Psoas muscle (tissue), 8 donors: ENCODE measurements at regions of chr11 and their contacts with region 1.

Region 1: GRCh38 chr11:62573592-62574362 is at the start of gene EEF1G:
- DNase-seq: peak; percentile 98 to 99
- ATAC-seq: peak; percentile 92 to 94 (median 94)
- H3K4me3 ChIP-seq: peak within 1 kb of the TSS; percentile 90
- H3K27ac ChIP-seq: peak within 1 kb of the TSS; percentile 92
- H3K4me1 ChIP-seq: peaks cover 56% of the 10 kb centered on the region
- H3K27me3 ChIP-seq: no peaks in the 10 kb centered on the region
- CTCF ChIP-seq: no peak
- total RNA-seq, gene EEF1G: 1,137 to 1,954 (median 1,509) TPM

Region 2: DNA sequence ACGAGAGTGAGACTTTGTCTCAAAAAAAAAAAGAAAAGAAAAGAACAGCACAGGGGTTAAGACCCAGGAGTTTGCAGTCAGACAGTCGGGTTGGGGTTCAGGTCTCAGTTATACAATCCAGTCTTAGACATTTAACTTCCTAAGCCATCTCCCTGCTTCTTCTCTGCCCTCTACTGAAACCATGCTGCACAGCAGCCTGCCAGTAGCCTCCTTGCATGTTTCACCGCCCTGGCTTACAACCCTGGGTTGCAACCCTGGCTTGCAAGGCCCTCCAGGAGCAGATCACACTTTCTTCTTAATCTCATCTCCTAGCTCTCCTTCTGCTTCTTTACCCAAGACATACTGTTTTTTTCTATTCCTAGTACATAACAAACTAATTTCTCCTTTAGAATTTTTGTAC is 53.9 kb after region 1 on chr11:
- intact Hi-C with region 1: no loop called
- DNase-seq: no peak
- ATAC-seq: no peak
- H3K4me3 ChIP-seq: no peak overlapping the region
- H3K27ac ChIP-seq: no peak overlapping the region
- H3K4me1 ChIP-seq: peaks cover under 1% of the 10 kb centered on the region
- H3K27me3 ChIP-seq: no peaks in the 10 kb centered on the region
- CTCF ChIP-seq: no peak

Region 3: GRCh38 chr11:62771144-62772021 is 197.6 kb after region 1 on chr11 and contains the start of gene TAF6L:
- intact Hi-C with region 1: no loop called
- DNase-seq: peak; percentile 98 to 99
- ATAC-seq: peak; percentile 96 to 98 (median 96)
- H3K4me3 ChIP-seq: peak within 1 kb of the TSS; percentile 86
- H3K27ac ChIP-seq: peak within 1 kb of the TSS; percentile 98
- H3K4me1 ChIP-seq: peaks cover 27% of the 10 kb centered on the region
- H3K27me3 ChIP-seq: no peaks in the 10 kb centered on the region
- CTCF ChIP-seq: no peak
- total RNA-seq, gene TAF6L: 13.5 to 19.9 (median 18.3) TPM

Region 4: DNA sequence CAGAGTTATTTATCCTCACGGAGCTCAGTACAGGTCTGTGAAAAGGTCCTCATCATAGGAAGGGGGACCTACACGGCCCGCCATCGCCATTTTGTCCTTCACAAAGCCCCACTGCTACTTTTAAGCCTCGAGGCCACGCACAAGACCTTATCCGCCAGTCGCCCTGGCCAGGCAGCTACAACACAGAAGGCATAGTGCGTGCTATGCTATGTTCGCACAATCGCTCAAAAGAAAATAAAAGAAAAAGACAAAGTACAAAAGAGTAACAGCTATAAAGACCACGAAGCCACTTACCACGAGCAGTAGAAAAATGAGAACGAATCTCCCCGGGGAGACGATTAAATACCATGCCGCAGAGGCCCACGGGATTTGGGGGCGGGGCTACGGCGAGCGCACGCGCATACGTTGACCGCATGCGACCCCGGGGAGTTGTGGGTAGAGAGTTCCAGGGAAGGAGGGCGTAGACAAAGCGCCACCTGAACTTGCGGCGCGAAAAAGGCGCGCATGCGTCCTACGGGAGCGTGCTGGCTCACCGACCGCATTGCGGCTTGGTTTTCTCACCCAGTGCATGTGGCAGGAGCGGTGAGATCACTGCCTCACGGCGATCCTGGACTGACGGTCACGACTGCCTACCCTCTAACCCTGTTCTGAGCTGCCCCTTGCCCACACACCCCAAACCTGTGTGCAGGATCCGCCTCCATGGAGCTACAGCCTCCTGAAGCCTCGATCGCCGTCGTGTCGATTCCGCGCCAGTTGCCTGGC is 282.0 kb after region 1 on chr11:
- intact Hi-C with region 1: loop called in 1 of 2 experiments (anchors 10 kb)
- DNase-seq: peak; percentile 96 to 98
- ATAC-seq: peak; percentile 97 to 99 (median 98)
- H3K4me3 ChIP-seq: peak overlapping the region; percentile 91
- H3K27ac ChIP-seq: peak overlapping the region; percentile 89
- H3K4me1 ChIP-seq: peaks cover 23% of the 10 kb centered on the region
- H3K27me3 ChIP-seq: no peaks in the 10 kb centered on the region
- CTCF ChIP-seq: no peak